PC-9 (cell line): ENCODE measurements at regions of chr14 and their contacts with region 1.

Region 1: GRCh38 chr14:34300882-34301734 is 160.9 kb downstream of the SPTSSA start:
- DNase-seq: peak in 1 of 2 experiments; percentile 17
- H3K4me3 ChIP-seq: no peak overlapping the region
- H3K27ac ChIP-seq: no peak overlapping the region
- H3K4me1 ChIP-seq: no peaks in the 10 kb centered on the region
- H3K27me3 ChIP-seq: no peaks in the 10 kb centered on the region
- CTCF ChIP-seq: peak; percentile 79

Region 2: GRCh38 chr14:33120341-33120740 is 1180.8 kb before region 1 on chr14:
- CTCF ChIA-PET with region 1: interaction called, 11 read pairs
- POLR2A ChIA-PET with region 1: no interaction called
- intact Hi-C with region 1: no loop called
- DNase-seq: no peak
- H3K4me3 ChIP-seq: no peak overlapping the region
- H3K27ac ChIP-seq: no peak overlapping the region
- H3K4me1 ChIP-seq: no peaks in the 10 kb centered on the region
- H3K27me3 ChIP-seq: no peaks in the 10 kb centered on the region
- CTCF ChIP-seq: no peak

Region 3: DNA sequence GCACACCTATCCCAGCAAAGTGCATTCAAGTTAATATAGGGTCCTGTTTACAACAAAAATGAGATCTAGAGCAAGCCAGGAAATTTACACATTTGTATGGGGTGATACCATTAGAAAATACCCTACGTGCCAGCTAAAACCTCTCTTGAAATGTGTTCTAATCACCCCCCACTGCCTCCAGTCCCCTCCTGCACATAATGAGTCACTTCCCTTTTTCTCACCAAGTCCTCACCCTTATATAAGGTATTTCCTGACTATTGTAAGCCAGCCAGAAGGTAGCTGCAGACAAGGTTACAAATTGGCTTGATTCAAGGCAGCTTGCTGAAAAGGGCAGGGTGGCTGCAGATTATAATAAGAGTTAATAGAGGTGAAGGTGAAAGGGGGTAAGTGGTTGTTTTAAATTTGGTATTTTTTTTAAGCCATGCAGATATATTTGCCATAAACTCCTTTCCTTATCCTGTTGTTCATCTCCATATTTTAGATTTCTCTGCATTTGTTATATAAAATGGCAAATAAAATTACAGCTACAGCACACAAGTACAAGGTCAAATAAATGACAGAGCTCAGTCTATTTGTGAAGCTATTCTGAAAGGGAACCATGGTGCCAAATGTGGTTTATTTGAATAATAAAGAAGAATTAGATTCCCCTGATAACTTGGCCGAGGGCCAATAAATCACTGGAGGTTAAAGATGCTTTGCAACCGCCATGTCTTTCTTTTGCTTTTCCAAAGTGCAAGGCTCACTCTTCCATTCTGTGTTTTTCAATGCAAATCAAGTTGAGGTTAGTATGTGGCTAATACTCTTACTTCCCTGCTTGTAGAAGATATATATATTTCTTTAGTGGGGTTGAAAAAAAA is 736.1 kb before region 1 on chr14:
- CTCF ChIA-PET with region 1: interaction called, 14 read pairs
- POLR2A ChIA-PET with region 1: no interaction called
- intact Hi-C with region 1: no loop called
- DNase-seq: peak; percentile 16 to 72
- H3K4me3 ChIP-seq: no peak overlapping the region
- H3K27ac ChIP-seq: peak overlapping the region; percentile 66
- H3K4me1 ChIP-seq: peaks cover 29% of the 10 kb centered on the region
- H3K27me3 ChIP-seq: no peaks in the 10 kb centered on the region
- CTCF ChIP-seq: no peak

Region 4: DNA sequence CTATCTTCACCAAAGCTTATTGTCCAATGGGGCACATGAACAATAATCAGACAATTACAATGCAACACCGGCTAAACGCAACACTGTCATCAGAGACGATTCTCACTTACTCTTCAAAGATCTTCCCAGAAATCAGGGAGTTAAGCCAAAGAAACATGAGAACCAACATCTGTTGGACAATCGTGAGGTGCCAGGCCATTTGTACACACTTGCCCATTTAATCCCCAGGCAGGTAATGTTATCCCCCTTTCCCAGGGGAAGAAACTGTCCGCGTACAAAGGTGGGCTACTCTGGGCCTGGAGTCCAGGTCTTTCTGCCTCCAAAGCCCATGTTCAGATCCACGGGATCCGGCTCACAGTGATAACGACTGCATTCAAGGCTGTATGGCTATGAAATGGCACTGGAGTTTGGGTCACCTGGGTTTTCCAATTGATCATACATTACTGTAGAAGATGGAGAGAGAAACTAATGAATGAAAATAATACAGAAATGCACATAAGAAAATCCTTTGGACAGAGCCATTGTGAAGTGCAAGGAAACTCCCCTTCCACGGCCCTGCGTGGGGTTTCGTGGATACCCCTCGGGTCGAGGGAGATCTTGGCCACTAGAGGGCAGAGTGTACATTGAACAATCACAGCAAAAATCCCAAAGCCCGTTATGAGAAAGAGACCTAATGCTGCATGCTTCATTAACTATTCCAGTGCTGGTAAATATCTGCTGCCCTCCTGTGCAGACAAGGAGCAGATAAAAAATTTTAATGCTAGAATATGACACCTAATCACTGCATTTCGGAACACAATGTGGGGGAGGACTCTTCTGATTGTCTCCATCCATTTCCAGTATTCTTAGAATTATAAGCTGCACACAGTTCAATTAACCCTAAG is 461.7 kb before region 1 on chr14:
- CTCF ChIA-PET with region 1: no interaction called
- POLR2A ChIA-PET with region 1: no interaction called
- intact Hi-C with region 1: no loop called
- DNase-seq: peak in 1 of 2 experiments; percentile 11
- H3K4me3 ChIP-seq: no peak overlapping the region
- H3K27ac ChIP-seq: no peak overlapping the region
- H3K4me1 ChIP-seq: peaks cover 30% of the 10 kb centered on the region
- H3K27me3 ChIP-seq: no peaks in the 10 kb centered on the region
- CTCF ChIP-seq: peak; percentile 81

Region 5: GRCh38 chr14:34187519-34188044 is 113.5 kb before region 1 on chr14:
- CTCF ChIA-PET with region 1: no interaction called
- POLR2A ChIA-PET with region 1: no interaction called
- intact Hi-C with region 1: no loop called
- DNase-seq: no peak
- H3K4me3 ChIP-seq: no peak overlapping the region
- H3K27ac ChIP-seq: no peak overlapping the region
- H3K4me1 ChIP-seq: no peaks in the 10 kb centered on the region
- H3K27me3 ChIP-seq: no peaks in the 10 kb centered on the region
- CTCF ChIP-seq: no peak

Region 6: GRCh38 chr14:34246206-34246605 is 54.9 kb before region 1 on chr14:
- CTCF ChIA-PET with region 1: interaction called, 13 read pairs
- POLR2A ChIA-PET with region 1: no interaction called
- intact Hi-C with region 1: no loop called
- DNase-seq: no peak
- H3K4me3 ChIP-seq: no peak overlapping the region
- H3K27ac ChIP-seq: no peak overlapping the region
- H3K4me1 ChIP-seq: no peaks in the 10 kb centered on the region
- H3K27me3 ChIP-seq: no peaks in the 10 kb centered on the region
- CTCF ChIP-seq: no peak